ENCODE measurements at regions of chr14 and their contacts with region 1.

Region 1: DNA sequence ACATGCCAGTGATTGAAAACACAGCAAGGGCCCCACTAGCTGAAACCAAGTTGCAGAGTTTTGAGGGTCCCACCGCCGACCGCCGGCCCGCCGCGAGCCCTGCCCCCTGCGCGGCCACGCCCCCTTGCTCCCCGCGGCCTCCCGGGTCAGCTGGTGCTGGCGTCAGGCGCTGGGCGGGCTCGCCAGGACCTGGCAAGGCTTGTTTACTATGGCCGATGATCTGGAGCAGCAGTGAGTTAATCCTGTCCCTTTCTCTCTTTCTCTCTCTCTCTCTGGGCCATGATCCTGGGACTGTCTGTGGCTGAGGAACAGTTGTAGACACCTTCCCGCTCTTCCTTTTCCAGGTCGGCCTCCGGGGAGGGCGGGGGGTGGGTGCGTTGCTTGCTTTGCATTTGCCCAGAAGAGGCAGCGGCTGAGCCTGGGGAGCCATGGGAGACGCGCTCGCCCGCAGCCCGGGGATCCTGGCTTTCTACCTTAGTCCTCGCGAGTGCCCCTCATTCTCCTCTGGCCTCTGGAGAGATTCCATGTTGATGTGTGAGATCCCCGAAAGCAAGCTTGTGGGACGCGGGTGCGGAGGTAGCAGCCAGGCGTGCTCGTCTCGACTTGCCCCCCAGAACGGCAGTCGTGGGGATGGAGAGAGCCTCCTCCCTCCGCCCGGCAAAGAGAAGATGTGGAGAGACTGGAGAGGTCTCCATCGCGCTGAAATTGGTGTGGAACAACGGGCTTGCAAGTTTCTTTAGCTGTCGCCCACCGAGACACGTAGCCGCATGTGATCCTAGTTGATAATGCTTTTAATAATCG is at the start of gene ABHD4:
- DNase-seq: peak; percentile 86
- CTCF ChIP-seq: no peak

Region 2: DNA sequence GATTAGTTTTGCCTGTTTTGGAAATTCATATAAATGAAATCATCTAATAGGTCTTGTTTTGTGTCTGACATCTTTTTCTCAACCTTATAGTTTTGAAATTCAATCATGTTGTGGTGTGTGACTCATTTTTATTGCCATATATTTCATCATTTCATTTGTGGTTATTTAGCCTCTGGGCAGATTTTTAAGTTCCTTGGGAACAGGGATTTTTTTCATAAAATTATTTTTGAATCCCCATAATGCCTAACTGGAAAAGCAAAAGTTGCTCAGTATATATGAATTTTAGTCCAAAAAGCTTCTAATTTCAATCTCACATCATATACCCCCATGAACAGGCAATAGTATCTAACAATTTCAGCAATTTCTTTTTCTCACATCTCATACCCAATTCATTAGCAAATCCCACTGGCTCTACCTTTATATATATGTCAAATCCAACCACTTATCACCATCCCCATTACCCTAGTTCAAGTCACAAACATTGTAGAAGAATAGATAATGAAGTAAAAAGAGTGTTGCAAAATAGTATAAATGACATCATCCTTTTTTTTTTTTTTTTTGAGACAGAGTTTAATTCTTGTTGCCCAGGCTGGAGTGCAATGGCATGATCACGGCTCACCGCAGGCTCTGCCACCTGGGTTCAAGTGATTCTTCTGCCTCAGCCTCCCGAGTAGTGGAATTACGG is 48.4 kb after region 1 on chr14:
- in situ Hi-C with region 1: loop called (anchors 10 kb)
- DNase-seq: no peak
- CTCF ChIP-seq: no peak

Measured in GM13977 (cell line).